Activated CD8-positive, alpha-beta memory T cell treated with anti-CD3 and anti-CD28 coated beads, Interleukin-2, amount 10 ng/mL, durations not matched to agents 7 days and 5 days (primary cell): ENCODE measurements at regions of chr7 and their contacts with region 1.

Region 1: GRCh38 chr7:101287032-101287431 is 34.6 kb downstream of the IFT22 start:
- DNase-seq: no peak
- ATAC-seq: no peak
- H3K4me3 Mint-ChIP-seq: no peak overlapping the region
- H3K27ac Mint-ChIP-seq: no peak overlapping the region
- H3K4me1 Mint-ChIP-seq: peaks cover 25% of the 10 kb centered on the region
- H3K27me3 Mint-ChIP-seq: peaks cover 22% of the 10 kb centered on the region

Region 2: DNA sequence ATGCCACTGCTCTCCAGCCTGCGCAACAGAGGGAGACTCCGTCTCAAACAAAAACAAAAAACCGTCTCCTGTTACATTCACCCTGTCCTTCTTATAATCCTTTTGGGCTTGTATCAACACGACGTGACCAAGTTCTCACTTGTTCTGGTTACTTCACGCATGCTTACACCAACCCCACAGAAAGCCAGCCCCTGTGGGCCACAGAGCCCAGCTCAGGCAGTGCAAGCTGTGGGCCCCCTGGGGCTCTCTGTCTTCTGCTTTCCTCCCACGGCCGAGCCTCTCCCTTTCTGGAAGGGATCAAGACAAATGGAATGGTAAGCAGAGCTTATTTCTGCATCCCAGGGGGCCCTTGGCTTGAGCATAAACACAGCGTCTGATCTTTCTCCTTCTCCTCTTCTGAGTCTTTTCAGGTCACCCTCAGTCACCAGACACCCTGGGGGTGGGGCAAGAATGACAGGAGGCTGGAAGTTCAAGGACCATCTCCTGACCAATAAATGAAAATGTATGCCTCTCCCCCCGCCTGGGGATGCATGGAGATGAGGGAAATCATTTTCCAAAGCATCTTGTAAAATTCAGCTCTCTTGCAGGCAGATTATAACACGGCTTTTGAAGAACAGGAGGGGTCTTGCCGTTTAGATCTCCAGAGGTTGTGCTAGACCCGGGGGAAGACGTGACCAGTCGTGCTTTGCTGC is 220.7 kb before region 1 on chr7:
- CTCF ChIA-PET with region 1: no interaction called
- DNase-seq: no peak
- ATAC-seq: no peak
- H3K4me3 Mint-ChIP-seq: no peak overlapping the region
- H3K27ac Mint-ChIP-seq: no peak overlapping the region
- H3K4me1 Mint-ChIP-seq: no peaks in the 10 kb centered on the region
- H3K27me3 Mint-ChIP-seq: peaks cover 20% of the 10 kb centered on the region

Region 3: DNA sequence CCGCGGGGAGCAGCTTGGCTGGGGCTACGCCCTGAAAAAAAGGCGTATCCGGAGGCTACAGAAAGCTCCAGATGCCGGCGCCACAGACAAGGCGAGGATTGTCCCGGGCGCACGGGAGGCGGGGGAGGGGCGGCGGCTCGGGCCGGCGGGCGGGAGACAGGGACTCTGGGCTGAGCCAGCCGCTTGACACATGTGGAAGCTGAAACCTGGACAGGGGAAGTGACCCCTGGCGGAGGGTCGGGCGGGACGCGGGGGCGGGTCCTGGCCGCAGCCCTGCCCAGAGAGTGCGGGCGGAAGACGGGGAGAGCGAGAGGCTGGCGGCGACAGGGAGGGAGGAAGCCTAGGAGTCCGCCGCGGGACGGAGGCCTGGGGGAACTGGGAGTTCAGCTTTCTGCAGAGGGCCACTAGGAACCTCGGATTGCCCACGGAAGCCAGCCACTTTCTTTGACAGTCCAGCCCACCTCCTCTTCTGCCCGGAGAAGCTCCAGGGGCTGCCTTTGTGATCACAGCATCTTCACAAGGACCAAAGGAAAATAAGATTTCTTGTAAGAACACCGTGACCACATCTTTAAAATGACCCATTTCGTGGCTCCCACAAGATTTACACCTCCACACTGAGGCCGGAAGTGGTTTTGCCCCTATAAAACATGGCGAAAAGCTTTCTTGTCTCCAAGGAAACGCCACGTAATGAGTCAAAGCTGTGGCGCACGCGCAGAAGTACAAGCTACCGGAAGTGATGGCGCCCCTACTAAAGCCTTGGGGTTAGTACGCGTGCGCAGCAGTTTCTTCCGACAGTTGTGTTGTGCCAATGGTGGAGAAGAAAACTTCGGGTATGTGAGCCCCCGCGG is 69.4 kb before region 1 on chr7 and contains the starts of genes PLOD3 and ZNHIT1:
- CTCF ChIA-PET with region 1: interaction called, 14 read pairs
- DNase-seq: peak; percentile 98
- ATAC-seq: peak; percentile 74
- H3K4me3 Mint-ChIP-seq: peak within 1 kb of the TSS; percentile 93
- H3K27ac Mint-ChIP-seq: peak within 1 kb of the TSS; percentile 84
- H3K4me1 Mint-ChIP-seq: peaks cover 27% of the 10 kb centered on the region
- H3K27me3 Mint-ChIP-seq: no peaks in the 10 kb centered on the region
- total RNA-seq, gene PLOD3: 41.6 to 42.3 TPM
- total RNA-seq, gene ZNHIT1: 56.6 to 57.1 TPM

Region 4: DNA sequence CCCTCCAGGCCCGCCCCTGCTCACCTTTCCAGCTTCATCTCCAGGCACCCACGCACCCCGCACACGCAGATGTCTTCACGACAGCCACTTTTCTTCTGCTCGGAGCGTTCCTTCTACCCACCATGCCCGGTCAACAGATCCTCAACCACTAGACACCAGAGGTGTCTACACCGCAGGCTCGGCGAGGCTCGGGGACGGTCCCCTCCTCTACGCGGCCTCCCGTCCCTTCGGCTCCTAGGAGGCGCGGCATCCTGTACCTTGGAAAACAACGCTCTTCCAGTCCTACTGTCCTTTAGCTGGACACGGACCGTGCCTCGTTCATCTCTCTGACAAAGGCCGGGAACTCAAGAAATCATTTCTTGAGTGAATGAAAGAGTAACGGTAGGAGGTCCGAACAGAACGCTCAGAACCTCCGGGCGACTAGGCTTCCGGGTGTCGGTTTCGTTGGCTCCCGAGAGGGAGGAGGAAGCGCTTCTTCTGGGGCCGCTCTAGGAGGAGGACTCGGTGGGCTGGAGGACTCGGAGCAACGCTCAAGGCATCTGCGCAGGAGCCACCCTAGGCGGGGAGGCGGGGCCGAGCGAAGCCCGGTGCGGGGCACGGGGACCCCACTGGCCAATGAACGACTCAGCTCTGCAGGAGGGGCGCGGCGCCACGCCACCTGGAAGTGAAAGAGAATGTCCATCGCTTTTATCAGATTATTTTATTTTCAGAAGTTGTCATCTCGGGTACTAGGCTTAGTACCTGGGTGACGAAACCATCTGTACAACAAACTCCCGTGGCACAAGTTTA is 35.0 kb before region 1 on chr7:
- CTCF ChIA-PET with region 1: interaction called, 12 read pairs
- DNase-seq: peak; percentile 100
- ATAC-seq: peak; percentile 100
- H3K4me3 Mint-ChIP-seq: peak overlapping the region; percentile 89
- H3K27ac Mint-ChIP-seq: peak overlapping the region; percentile 92
- H3K4me1 Mint-ChIP-seq: peaks cover 28% of the 10 kb centered on the region
- H3K27me3 Mint-ChIP-seq: no peaks in the 10 kb centered on the region

Region 5: GRCh38 chr7:101315336-101315735 is 28.3 kb after region 1 on chr7:
- CTCF ChIA-PET with region 1: interaction called, 13 read pairs
- DNase-seq: peak; percentile 67
- ATAC-seq: no peak
- H3K4me3 Mint-ChIP-seq: no peak overlapping the region
- H3K27ac Mint-ChIP-seq: no peak overlapping the region
- H3K4me1 Mint-ChIP-seq: no peaks in the 10 kb centered on the region
- H3K27me3 Mint-ChIP-seq: no peaks in the 10 kb centered on the region